Activated CD4-positive, alpha-beta memory T cell treated with anti-CD3 and anti-CD28 coated beads, Interleukin-2, amount 10 ng/mL, durations not matched to agents 7 days and 5 days (primary cell): ENCODE measurements at regions of chr12 and their contacts with region 1.

Region 1: GRCh38 chr12:55829967-55830600 is 697 bp upstream of the DNAJC14 start:
- DNase-seq: peak; percentile 50
- H3K4me3 Mint-ChIP-seq: peak overlapping the region; percentile 99
- H3K27ac Mint-ChIP-seq: peak overlapping the region; percentile 94
- H3K4me1 Mint-ChIP-seq: peaks cover 54% of the 10 kb centered on the region
- H3K27me3 Mint-ChIP-seq: no peaks in the 10 kb centered on the region

Region 2: GRCh38 chr12:55797068-55797467 is 33.0 kb before region 1 on chr12:
- CTCF ChIA-PET with region 1: no interaction called
- POLR2A ChIA-PET with region 1: no interaction called
- DNase-seq: no peak
- H3K4me3 Mint-ChIP-seq: no peak overlapping the region
- H3K27ac Mint-ChIP-seq: no peak overlapping the region
- H3K4me1 Mint-ChIP-seq: peaks cover 17% of the 10 kb centered on the region
- H3K27me3 Mint-ChIP-seq: no peaks in the 10 kb centered on the region

Region 3: DNA sequence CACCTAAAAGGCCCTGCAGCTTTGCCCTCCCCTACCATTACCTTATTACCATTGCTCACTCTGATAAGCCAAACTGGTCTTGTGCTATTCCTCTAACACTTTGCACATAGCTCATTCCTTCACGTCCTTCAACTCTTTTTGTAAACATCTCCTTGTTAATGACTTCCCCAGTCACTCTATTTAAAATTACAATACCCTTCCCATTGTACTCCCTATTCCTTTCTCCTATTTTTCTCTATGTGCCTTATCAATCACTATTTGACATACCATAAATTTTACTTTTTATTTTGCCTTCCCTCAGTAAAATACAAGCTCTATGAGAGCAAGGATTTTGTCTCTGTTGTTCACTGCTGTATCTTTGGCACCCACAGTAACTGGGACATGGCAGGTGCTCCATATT is 18.0 kb before region 1 on chr12:
- CTCF ChIA-PET with region 1: interaction called, 22 read pairs
- POLR2A ChIA-PET with region 1: interaction called, 105 read pairs
- DNase-seq: no peak
- H3K4me3 Mint-ChIP-seq: no peak overlapping the region
- H3K27ac Mint-ChIP-seq: no peak overlapping the region
- H3K4me1 Mint-ChIP-seq: peaks cover 39% of the 10 kb centered on the region
- H3K27me3 Mint-ChIP-seq: no peaks in the 10 kb centered on the region

Region 4: DNA sequence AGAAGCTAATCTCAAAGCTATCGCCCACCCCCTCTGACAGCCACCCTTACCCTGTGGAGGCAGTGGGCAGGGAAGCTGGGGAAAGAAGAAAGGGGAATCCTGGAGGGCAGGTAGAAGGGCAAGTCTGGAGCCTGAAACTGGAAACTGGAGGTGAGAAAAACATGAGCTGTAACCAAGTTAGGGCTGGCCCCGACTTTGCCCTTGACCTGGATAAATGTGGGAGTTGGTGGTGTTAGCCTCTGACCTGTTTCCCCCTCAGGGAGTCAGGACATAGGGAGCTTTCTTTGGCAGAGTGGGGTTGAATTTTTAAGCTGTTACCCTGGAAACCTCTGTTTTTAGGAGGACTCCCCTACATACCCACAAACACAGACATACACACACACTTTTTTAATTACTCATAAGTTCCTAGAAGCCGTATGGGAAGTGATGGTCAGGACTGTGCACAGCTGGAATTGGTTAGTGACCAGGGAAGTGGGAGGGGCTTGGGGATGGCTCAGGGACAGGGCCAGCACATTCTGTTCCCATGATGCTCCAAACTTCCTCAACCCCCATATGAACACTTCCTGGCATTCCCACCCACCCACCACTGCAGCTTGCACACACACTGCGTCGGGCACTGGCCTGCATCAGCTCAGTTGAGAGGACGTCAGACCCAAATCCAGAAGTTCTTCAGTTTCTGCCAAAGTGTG is 17.7 kb after region 1 on chr12:
- CTCF ChIA-PET with region 1: interaction called, 3 read pairs
- POLR2A ChIA-PET with region 1: interaction called, 12 read pairs
- DNase-seq: no peak
- H3K4me3 Mint-ChIP-seq: no peak overlapping the region
- H3K27ac Mint-ChIP-seq: peak overlapping the region; percentile 11
- H3K4me1 Mint-ChIP-seq: peaks cover 14% of the 10 kb centered on the region
- H3K27me3 Mint-ChIP-seq: peaks cover 14% of the 10 kb centered on the region

Region 5: DNA sequence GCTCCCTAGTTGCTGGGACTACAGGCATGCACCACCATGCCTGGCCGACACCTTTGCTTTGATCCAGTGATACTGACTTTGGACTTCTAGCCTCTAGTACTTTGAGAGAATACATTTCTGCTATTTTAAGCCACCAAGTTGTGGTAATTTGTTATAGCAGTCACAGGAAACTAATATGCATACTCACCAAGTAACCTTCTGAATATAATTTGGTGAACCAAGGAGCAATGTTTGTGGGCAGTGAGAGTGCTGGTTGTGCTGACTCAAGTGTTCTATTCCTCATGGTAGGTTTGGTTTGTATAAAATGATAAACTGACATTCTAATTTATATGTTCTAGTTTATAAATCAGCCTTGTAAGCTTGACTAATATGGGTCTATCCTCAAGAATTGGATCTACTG is 55.0 kb after region 1 on chr12:
- CTCF ChIA-PET with region 1: no interaction called
- POLR2A ChIA-PET with region 1: no interaction called
- DNase-seq: no peak
- H3K4me3 Mint-ChIP-seq: no peak overlapping the region
- H3K27ac Mint-ChIP-seq: no peak overlapping the region
- H3K4me1 Mint-ChIP-seq: peaks cover 12% of the 10 kb centered on the region
- H3K27me3 Mint-ChIP-seq: no peaks in the 10 kb centered on the region

Region 6: DNA sequence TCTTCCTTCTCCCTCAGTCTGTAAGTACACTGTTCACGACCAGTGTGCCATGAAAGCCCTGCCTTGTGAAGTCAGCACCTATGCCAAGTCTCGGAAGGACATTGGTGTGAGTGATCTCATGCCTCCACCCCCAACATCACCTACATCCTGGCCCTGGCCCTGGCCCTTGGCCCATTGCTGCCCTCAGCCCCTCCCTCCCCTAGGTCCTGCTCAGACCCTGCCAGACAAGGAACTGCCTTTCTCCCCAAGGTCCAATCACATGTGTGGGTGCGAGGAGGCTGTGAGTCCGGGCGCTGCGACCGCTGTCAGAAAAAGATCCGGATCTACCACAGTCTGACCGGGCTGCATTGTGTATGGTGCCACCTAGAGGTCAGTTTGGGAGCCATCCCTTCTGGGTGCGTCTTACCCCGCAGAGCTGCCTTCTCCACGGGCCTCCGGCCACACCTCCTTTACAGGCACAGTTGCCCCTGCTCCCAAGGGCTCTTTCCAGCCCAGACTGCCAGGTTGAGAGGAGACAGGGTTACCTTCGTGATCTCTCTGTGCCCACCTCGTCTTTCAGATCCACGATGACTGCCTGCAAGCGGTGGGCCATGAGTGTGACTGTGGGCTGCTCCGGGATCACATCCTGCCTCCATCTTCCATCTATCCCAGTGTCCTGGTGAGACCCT is 110.1 kb after region 1 on chr12:
- CTCF ChIA-PET with region 1: interaction called, 7 read pairs
- POLR2A ChIA-PET with region 1: interaction called, 12 read pairs
- DNase-seq: peak; percentile 86
- H3K4me3 Mint-ChIP-seq: no peak overlapping the region
- H3K27ac Mint-ChIP-seq: peak overlapping the region; percentile 76
- H3K4me1 Mint-ChIP-seq: peaks cover 75% of the 10 kb centered on the region
- H3K27me3 Mint-ChIP-seq: no peaks in the 10 kb centered on the region